ENCODE measurements at regions of chr15 and their contacts with region 1.

Region 1: DNA sequence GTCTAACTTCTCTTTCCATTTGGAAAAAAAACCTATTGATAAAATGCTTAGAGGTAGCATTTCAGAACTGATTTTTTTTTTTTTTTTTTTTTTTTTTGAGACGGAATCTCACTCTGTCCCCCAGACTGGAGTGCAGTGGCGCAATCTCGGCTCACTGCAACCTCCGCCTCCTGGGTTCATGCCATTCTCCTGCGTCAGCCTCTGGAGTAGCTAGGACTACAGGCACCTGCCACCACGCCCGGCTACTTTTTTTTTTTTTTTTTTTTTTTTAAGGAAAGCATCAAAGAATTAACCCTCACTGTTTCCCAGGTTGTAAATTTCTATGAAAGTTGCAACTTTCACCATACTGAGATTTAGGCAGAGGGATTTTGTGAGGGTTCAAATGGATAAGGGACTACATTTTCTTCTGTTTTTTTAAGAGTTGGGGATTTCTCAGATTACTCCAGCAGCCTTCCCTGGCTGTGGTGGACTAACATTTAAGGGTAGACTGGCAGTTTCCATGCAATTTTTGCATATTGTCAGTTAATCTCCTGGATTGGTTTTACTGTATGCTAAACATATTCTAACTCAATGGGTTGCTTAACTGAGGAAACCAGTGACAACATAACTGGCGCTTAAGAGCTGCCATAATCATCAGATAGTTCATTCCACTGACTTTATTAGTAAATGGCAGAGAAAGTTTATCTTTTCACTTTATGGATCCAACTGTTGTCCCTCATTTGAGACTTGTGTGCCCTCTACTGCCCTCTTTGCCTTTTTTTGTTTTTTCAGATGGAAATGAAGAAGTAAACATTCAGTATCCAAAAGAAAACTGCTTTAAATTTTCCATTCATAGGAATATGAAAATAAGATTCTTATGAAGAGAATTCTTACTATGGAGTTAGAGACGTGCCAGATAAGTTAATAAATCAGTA is 93.7 kb downstream of the NPTN start:
- DNase-seq: peak; percentile 74
- H3K4me3 Mint-ChIP-seq: no peak overlapping the region
- H3K27ac Mint-ChIP-seq: no peak overlapping the region
- H3K4me1 Mint-ChIP-seq: peaks cover 13% of the 10 kb centered on the region
- H3K27me3 Mint-ChIP-seq: no peaks in the 10 kb centered on the region
- CTCF ChIP-seq: no peak

Region 2: DNA sequence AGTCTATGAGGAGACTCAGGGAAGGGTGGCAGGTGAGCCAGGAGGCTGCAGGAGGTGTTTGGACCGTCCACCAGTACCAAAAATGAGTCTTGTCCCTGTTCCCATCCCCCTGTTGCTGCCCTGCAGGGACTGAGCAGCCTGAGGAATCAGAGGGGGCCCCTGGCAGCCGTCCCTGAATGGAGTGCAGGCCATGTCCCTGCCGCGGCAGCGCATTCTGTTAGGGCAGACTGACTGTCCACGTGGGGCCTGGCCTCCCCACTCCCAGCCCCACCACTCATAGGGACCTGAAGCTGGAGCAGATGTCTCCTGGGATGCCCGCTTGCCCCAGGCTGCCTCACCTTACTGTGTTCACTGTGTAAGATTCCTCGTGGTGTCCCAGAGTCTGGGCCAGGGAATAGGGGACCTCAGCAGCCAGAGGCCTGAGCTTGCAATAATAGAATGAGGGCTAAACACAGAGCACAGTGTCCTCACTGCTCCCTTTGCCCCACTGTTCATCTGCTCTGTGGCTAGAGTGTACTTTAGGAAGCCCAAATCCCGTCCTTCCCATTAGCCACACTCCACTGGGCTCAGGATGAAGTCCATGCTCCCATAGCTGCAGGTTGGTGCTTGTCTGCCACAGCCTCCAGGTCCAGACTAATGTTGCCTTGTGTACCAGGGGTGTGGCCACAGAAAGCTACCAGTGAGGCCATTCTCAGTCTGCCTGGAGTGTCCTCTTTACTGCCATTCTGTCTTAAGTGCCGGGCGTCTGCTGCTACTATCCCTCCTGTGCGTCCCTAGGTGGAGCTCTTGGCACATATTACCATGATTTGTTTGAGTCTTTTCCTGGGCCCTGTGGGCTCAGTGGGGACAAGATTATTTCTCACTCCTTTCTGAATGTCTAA is 233.9 kb before region 1 on chr15:
- CTCF ChIA-PET with region 1: no interaction called
- intact Hi-C with region 1: loop called (anchors 5 kb)
- DNase-seq: peak; percentile 64
- H3K4me3 Mint-ChIP-seq: no peak overlapping the region
- H3K27ac Mint-ChIP-seq: no peak overlapping the region
- H3K4me1 Mint-ChIP-seq: no peaks in the 10 kb centered on the region
- H3K27me3 Mint-ChIP-seq: no peaks in the 10 kb centered on the region
- CTCF ChIP-seq: peak; percentile 54

Region 3: DNA sequence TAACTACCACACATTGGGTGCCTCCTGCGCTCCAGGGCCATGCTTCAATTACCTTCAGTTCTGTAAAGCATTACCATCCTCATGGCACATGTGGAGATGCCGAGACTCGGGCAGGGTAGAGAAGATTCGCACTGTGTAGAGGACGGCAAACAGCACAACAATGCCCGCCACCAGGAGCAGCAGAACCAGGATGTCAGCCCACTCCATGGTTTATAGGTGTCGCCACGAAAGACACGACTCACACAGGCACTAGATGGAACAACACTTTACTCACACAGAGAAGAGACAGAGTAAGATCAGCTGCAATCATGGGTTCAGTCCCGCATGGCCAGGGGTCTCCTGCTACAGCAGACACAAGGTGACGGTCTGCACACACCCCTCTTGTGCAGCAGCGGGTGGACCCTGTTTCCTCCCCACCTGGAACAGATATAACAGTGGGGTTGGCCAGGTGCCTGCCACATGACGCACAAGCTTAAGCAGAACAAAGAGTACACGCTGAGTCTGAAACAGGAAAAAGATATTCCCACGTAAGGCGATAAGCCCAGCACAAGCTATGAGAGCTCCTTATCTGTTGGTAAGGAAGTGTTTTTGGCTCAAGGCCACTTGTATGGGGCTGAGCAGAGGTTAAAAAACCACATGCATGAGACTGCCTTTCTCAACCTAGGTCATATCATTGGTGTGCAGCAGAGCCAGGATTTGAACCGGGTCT is 331.4 kb after region 1 on chr15:
- CTCF ChIA-PET with region 1: no interaction called
- intact Hi-C with region 1: no loop called
- DNase-seq: peak; percentile 22
- H3K4me3 Mint-ChIP-seq: no peak overlapping the region
- H3K27ac Mint-ChIP-seq: no peak overlapping the region
- H3K4me1 Mint-ChIP-seq: peaks cover 8% of the 10 kb centered on the region
- H3K27me3 Mint-ChIP-seq: peaks cover 100% of the 10 kb centered on the region
- CTCF ChIP-seq: no peak